Activated naive CD4-positive, alpha-beta T cell treated with anti-CD3 and anti-CD28 coated beads for 36 hours (primary cell): ENCODE measurements at regions of chr17 and their contacts with region 1.

Region 1: GRCh38 chr17:59746849-59747445 is 39.5 kb downstream of the VMP1 start:
- DNase-seq: no peak
- H3K4me3 Mint-ChIP-seq: no peak overlapping the region
- H3K27ac Mint-ChIP-seq: peak overlapping the region; percentile 61
- H3K4me1 Mint-ChIP-seq: peaks cover 18% of the 10 kb centered on the region
- H3K27me3 Mint-ChIP-seq: no peaks in the 10 kb centered on the region

Region 2: DNA sequence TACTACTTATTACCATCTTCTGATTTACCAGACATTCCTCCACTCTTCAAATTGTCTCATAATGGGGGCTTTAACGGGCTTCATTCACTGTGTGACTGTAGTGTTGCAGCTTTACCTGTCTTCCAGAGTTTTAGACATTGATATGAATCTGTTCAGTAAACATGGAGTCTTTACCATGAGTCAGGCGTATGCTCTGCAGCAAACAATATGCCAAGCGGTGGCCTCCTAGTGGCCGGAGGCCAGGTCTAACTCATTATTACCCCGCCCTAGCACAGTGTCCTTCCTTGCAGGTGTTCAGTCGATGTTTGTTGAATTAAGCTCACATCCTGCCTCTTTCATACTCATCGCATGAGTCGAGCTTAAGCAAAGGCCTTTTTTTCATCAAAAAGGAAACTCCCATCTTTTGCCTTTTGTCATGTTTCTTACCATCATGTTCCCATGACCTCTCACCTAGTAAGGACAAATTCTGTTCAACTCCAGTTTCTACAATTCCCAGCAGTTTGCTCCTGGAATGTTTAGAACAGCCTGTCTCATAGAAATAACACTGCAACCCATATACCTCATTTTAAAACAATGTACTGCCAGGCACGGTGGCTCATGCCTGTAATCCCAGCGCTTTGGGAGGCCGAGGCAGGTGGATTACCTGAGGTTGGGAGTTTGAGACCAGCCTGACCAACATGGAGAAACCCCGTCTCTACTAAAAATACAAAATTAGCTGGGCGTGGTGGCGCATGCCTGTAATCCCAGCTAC is 106.4 kb after region 1 on chr17:
- CTCF ChIA-PET with region 1: interaction called, 49 read pairs
- intact Hi-C with region 1: no loop called
- DNase-seq: peak; percentile 86
- H3K4me3 Mint-ChIP-seq: peak overlapping the region; percentile 4
- H3K27ac Mint-ChIP-seq: peak overlapping the region; percentile 77
- H3K4me1 Mint-ChIP-seq: peaks cover 57% of the 10 kb centered on the region
- H3K27me3 Mint-ChIP-seq: no peaks in the 10 kb centered on the region

Region 3: DNA sequence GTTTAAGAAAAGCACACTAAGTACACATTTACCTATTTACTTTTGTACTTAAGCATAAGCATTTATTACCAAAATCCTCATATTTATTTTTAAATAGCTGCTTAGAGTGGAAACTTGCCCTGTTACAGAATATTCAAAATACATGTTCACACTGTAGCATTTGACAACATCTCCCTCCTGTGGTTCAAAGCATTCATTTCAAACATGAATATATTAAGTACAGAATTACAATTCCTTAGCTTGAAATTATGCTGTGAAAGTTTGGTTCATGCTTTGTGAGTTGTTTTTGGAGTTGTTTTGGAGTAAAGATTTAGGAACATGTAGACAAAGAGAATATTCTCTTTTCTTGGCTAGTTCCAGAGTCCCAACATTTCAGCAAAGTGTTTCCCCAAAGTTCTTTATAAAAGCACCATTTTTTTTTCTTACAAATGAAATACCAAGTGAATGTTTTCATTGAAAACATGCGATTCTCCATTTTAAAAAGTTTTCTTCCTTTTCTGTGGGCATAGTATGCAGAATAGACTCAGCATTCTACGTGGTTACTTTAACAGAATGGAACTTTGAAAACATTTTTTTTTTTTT is 112.6 kb after region 1 on chr17:
- CTCF ChIA-PET with region 1: interaction called, 3 read pairs
- intact Hi-C with region 1: loop called (anchors 1 kb)
- DNase-seq: no peak
- H3K4me3 Mint-ChIP-seq: no peak overlapping the region
- H3K27ac Mint-ChIP-seq: peak overlapping the region; percentile 65
- H3K4me1 Mint-ChIP-seq: peaks cover 21% of the 10 kb centered on the region
- H3K27me3 Mint-ChIP-seq: no peaks in the 10 kb centered on the region

Region 4: GRCh38 chr17:59914274-59914854 is 167.4 kb after region 1 on chr17:
- CTCF ChIA-PET with region 1: interaction called, 7 read pairs
- intact Hi-C with region 1: loop called (anchors 1 kb)
- DNase-seq: peak; percentile 32
- H3K4me3 Mint-ChIP-seq: no peak overlapping the region
- H3K27ac Mint-ChIP-seq: no peak overlapping the region
- H3K4me1 Mint-ChIP-seq: peaks cover 2% of the 10 kb centered on the region
- H3K27me3 Mint-ChIP-seq: no peaks in the 10 kb centered on the region